ENCODE measurements at regions of chr12 and their contacts with region 1.

Region 1: DNA sequence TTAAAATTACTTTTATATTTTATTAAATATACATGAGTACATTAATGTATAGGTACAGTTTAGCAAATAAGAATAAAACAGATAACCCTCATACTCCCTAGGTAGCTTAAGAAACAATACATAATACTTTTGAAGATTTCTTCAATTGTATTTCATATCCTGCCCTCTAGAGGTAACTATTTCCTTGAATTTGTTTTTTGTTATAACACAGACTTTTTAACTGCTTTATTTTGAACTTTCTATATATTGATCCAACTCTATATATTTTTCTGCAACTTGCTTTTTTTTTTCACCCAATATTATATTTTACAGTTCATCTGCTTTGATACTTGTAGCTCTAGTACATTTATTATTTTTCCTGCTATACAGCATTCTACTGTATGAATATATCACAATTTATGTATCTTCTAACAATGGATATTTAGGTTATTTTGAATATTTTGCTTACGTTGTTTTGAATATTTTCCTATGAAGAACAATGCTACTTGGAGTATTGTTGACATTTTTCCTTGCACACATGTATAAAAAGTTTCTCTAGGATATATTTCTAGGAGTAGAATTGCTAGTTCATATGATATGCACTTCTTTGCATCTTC is 72.8 kb upstream of the ABCD2 start:
- DNase-seq: peak in 4 of 5 donors; percentile 30 to 41 (median 32)
- H3K4me3 ChIP-seq: no peak overlapping the region
- H3K4me3 Mint-ChIP-seq: no peak overlapping the region
- H3K27ac ChIP-seq: no peak overlapping the region
- H3K27ac Mint-ChIP-seq: no peak overlapping the region
- H3K4me1 ChIP-seq: peaks cover 10% of the 10 kb centered on the region
- H3K4me1 Mint-ChIP-seq: peaks cover 2 to 5% (median 3%) of the 10 kb centered on the region in 4 donors
- H3K27me3 ChIP-seq: no peaks in the 10 kb centered on the region
- H3K27me3 Mint-ChIP-seq: no peaks in the 10 kb centered on the region

Region 2: DNA sequence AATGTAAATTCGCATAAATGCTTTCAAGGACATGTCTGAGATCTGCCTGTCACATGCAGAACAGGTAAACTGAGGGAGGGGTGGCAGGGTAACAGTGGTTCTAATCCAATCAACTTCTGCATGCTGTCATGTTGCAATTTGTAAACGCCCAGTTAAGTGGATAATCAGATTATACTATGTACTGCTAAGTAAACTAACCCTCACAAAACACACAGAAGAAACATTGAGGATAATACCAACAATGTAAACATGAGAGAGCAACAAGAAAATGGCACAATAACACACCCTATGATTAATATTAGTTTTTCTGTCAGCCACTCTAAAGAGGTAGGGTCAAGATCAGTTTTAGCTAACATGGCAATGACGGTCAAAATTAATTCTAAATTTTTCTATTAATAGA is 373.2 kb before region 1 on chr12:
- CTCF ChIA-PET with region 1: interaction called, 14 read pairs
- POLR2A ChIA-PET with region 1: no interaction called
- intact Hi-C with region 1: loop called (anchors 1 kb)
- DNase-seq: peak in 1 of 5 donors; percentile 14
- H3K4me3 ChIP-seq: no peak overlapping the region
- H3K4me3 Mint-ChIP-seq: no peak overlapping the region
- H3K27ac ChIP-seq: no peak overlapping the region
- H3K27ac Mint-ChIP-seq: peak overlapping the region in 1 of 7 donors; percentile 47
- H3K4me1 ChIP-seq: no peaks in the 10 kb centered on the region
- H3K4me1 Mint-ChIP-seq: peaks cover 0 to 2% (median 0%) of the 10 kb centered on the region in 4 donors
- H3K27me3 ChIP-seq: no peaks in the 10 kb centered on the region
- H3K27me3 Mint-ChIP-seq: no peaks in the 10 kb centered on the region

Region 3: DNA sequence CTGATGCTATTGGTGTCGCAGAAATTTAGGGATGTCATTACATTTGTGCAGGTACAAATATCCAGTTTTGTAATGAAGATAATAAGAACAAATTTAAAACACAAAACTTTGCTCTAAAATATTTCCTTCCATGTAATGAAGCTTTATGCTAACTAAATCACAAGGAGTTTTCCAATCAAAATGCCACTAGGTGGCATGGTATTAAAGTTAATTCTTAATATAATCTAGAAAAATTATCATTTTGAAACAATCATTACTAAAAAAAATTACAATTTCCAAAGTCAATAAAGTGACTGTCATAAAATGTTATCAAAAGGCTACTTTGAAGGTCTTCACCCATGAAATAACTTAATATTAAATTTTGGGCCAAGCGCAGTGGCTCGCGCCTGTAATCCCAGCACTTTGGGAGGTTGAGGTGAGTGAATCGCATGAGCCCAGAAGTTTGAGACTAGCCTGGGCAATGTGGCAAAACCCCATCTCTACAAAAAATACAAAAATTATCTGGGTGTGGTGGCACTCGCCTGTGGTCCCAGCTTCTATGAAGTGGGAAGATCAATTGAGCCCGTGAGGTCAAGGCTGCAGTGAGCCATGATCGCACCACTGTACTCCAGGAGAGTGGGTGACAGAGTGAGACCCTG is 326.9 kb before region 1 on chr12:
- CTCF ChIA-PET with region 1: no interaction called
- POLR2A ChIA-PET with region 1: no interaction called
- intact Hi-C with region 1: loop called (anchors 2 kb)
- DNase-seq: no peak
- H3K4me3 ChIP-seq: no peak overlapping the region
- H3K4me3 Mint-ChIP-seq: no peak overlapping the region
- H3K27ac ChIP-seq: no peak overlapping the region
- H3K27ac Mint-ChIP-seq: no peak overlapping the region
- H3K4me1 ChIP-seq: no peaks in the 10 kb centered on the region
- H3K4me1 Mint-ChIP-seq: peaks cover 0 to 1% (median 0%) of the 10 kb centered on the region in 4 donors
- H3K27me3 ChIP-seq: no peaks in the 10 kb centered on the region
- H3K27me3 Mint-ChIP-seq: no peaks in the 10 kb centered on the region

Region 4: DNA sequence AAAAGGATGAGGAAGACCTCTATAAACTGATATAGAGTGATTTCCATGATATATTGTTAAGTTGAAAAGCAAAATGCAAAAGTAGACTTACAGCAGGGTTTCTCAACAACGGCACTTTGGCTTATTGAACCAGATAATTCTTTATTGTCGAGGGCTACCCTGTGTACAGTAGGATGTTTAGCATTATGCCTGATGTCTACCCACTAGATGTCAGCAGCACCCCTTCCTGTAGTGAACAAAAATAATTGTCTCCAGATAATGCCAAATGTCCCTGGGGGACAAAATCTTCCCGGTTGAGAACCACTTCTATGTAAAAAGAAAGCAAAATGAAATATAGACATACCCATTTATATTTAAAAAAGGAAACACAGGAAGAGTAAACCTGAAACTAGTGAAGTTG is 105.1 kb before region 1 on chr12:
- CTCF ChIA-PET with region 1: interaction called, 44 read pairs
- POLR2A ChIA-PET with region 1: no interaction called
- intact Hi-C with region 1: loop called (anchors 1 kb)
- DNase-seq: peak; percentile 36 to 50 (median 40)
- H3K4me3 ChIP-seq: no peak overlapping the region
- H3K4me3 Mint-ChIP-seq: no peak overlapping the region
- H3K27ac ChIP-seq: no peak overlapping the region
- H3K27ac Mint-ChIP-seq: no peak overlapping the region
- H3K4me1 ChIP-seq: no peaks in the 10 kb centered on the region
- H3K4me1 Mint-ChIP-seq: peaks cover 3 to 7% (median 5%) of the 10 kb centered on the region in 4 donors
- H3K27me3 ChIP-seq: no peaks in the 10 kb centered on the region
- H3K27me3 Mint-ChIP-seq: no peaks in the 10 kb centered on the region

Region 5: DNA sequence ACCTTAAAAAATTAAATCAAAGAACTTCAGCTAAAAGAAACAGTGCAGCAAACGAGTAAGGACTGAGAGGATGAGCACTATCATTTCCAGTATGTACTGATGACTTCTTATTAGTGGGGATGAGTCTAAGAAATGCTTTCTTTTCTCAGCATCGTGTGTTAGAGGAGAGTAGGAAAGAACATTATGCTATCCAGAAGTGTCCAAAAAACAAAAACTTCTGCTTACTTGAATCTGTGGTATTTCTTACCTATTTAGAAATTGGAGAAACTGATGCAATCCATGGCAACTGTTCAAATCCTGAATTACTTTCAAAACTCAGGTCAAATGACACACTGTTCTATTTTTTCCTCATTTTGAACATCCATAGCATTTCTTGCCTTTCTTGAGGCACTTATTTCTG is 96.4 kb before region 1 on chr12:
- CTCF ChIA-PET with region 1: interaction called, 21 read pairs
- POLR2A ChIA-PET with region 1: no interaction called
- intact Hi-C with region 1: no loop called
- DNase-seq: no peak
- H3K4me3 ChIP-seq: no peak overlapping the region
- H3K4me3 Mint-ChIP-seq: no peak overlapping the region
- H3K27ac ChIP-seq: no peak overlapping the region
- H3K27ac Mint-ChIP-seq: peak overlapping the region in 4 of 7 donors; percentile 48 to 75 (median 60)
- H3K4me1 ChIP-seq: no peaks in the 10 kb centered on the region
- H3K4me1 Mint-ChIP-seq: peaks cover 6 to 15% (median 7%) of the 10 kb centered on the region in 4 donors
- H3K27me3 ChIP-seq: no peaks in the 10 kb centered on the region
- H3K27me3 Mint-ChIP-seq: no peaks in the 10 kb centered on the region

Region 6: DNA sequence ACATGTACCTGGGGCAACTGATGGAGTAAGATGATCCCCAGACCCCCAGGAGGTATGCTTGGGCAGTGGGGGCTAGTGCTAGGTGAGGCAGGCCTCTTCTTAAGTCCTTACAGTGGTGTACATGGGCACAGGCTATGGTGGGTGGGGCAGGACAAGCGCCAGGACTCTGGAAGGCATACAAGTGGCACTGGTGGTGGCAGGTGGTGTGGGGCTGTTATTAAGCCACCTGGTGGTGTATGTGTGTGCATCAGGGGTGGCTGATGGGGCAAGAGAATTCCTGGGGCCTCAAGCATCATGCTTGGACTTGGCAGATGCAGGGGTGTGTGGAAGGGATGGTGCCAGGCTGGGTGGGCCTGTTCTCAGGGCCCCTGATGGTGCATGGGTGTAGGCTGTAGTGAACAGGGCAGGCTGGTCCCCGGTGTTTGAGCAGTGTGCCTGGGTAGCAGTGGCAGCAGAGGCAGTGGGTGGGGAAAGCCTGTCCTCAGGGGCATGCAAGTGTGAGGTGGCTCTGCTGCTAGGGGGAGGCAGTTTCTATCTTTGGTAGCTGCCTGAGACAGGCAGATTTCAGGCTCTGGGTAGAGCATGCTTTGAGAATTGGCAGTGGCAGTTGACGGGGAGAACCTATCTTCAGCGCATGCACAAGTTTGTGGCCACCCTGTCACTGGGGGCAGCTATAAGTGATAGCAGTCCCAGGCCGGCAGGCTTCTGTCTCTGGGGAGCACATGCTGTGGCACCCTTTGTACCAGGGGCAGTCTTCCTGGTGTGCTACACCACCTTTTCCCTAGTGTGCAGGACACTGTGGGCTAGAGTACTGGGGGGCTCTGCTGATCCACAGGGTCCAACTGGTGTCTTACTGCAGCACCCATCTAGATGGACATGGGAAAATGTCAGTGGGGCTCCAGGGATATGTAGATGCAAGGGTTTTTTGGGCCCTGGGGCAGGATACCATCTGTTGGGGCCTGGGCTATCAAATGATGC is 20.2 kb before region 1 on chr12:
- CTCF ChIA-PET with region 1: interaction called, 22 read pairs
- POLR2A ChIA-PET with region 1: interaction called, 6 read pairs
- intact Hi-C with region 1: no loop called
- DNase-seq: no peak
- H3K4me3 ChIP-seq: no peak overlapping the region
- H3K4me3 Mint-ChIP-seq: peak overlapping the region in 1 of 8 donors; percentile 27
- H3K27ac ChIP-seq: no peak overlapping the region
- H3K27ac Mint-ChIP-seq: peak overlapping the region in 3 of 7 donors; percentile 11 to 72 (median 36)
- H3K4me1 ChIP-seq: peaks cover 48% of the 10 kb centered on the region
- H3K4me1 Mint-ChIP-seq: peaks cover 31 to 74% (median 50%) of the 10 kb centered on the region in 4 donors
- H3K27me3 ChIP-seq: no peaks in the 10 kb centered on the region
- H3K27me3 Mint-ChIP-seq: no peaks in the 10 kb centered on the region

Region 7: GRCh38 chr12:39712334-39712733 is 20.0 kb after region 1 on chr12:
- CTCF ChIA-PET with region 1: no interaction called
- POLR2A ChIA-PET with region 1: no interaction called
- intact Hi-C with region 1: no loop called
- DNase-seq: no peak
- H3K4me3 ChIP-seq: no peak overlapping the region
- H3K4me3 Mint-ChIP-seq: no peak overlapping the region
- H3K27ac ChIP-seq: no peak overlapping the region
- H3K27ac Mint-ChIP-seq: no peak overlapping the region
- H3K4me1 ChIP-seq: no peaks in the 10 kb centered on the region
- H3K4me1 Mint-ChIP-seq: no peaks in the 10 kb centered on the region
- H3K27me3 ChIP-seq: no peaks in the 10 kb centered on the region
- H3K27me3 Mint-ChIP-seq: no peaks in the 10 kb centered on the region

Region 8: GRCh38 chr12:39990122-39991101 is 298.1 kb after region 1 on chr12:
- CTCF ChIA-PET with region 1: no interaction called
- POLR2A ChIA-PET with region 1: no interaction called
- intact Hi-C with region 1: loop called (anchors 1 kb)
- DNase-seq: peak; percentile 33 to 50 (median 45)
- H3K4me3 ChIP-seq: no peak overlapping the region
- H3K4me3 Mint-ChIP-seq: no peak overlapping the region
- H3K27ac ChIP-seq: no peak overlapping the region
- H3K27ac Mint-ChIP-seq: peak overlapping the region in 2 of 7 donors; percentile 25 to 38
- H3K4me1 ChIP-seq: no peaks in the 10 kb centered on the region
- H3K4me1 Mint-ChIP-seq: peaks cover 3 to 8% (median 7%) of the 10 kb centered on the region in 4 donors
- H3K27me3 ChIP-seq: no peaks in the 10 kb centered on the region
- H3K27me3 Mint-ChIP-seq: no peaks in the 10 kb centered on the region